Gastrocnemius medialis (tissue), 4 donors: ENCODE measurements at regions of chr18 and their contacts with region 1.

Region 1: GRCh38 chr18:75161256-75162028 is 47.5 kb downstream of the PTGR3 start:
- DNase-seq: peak in 1 of 2 donors; percentile 65
- ATAC-seq: peak; percentile 68 to 86
- H3K4me3 ChIP-seq: peak overlapping the region; percentile 53 to 59 (median 55)
- H3K27ac ChIP-seq: peak overlapping the region; percentile 22 to 60 (median 32)
- H3K4me1 ChIP-seq: peaks cover 16 to 18% of the 10 kb centered on the region in 2 donors
- H3K27me3 ChIP-seq: no peaks in the 10 kb centered on the region
- CTCF ChIP-seq: peak in 2 of 5 experiments; percentile 16 to 40
- POLR2A ChIP-seq: no peak

Region 2: DNA sequence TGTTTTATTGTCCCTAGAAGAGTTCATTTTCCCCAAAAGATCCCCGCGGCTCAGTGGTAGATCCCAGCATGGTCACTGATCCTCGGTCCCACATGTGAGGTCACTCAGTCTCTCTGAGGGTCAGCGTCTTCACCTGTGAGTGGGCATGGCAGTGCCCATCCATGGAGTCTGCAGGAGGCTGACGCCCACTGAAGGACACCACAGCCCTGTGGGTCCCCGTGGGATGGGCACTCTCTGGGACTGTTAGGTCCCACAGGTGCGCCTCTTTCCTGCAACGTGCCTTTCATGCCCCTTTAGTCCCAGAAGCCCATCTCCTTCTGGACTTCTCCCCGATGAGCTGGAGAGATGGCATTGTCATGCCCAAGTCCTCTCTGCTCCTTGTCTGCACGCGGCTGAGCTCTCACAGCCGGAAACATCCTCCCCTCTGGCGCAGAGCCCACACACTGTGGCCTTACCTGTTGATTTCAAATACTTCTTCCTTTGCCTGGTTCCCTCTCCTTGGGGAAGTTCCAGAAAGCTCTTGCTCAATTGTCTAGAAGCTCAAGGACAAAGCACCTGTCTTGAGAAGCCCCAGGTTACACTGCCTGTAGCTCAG is 28.4 kb before region 1 on chr18:
- in situ Hi-C with region 1: no loop called
- intact Hi-C with region 1: loop called (anchors 2 kb)
- DNase-seq: no peak
- ATAC-seq: no peak
- H3K4me3 ChIP-seq: no peak overlapping the region
- H3K27ac ChIP-seq: no peak overlapping the region
- H3K4me1 ChIP-seq: no peaks in the 10 kb centered on the region
- H3K27me3 ChIP-seq: peaks cover 0 to 8% (median 2%) of the 10 kb centered on the region in 3 donors
- CTCF ChIP-seq: no peak
- POLR2A ChIP-seq: no peak

Region 3: GRCh38 chr18:75204269-75204731 is 42.9 kb after region 1 on chr18:
- in situ Hi-C with region 1: no loop called
- intact Hi-C with region 1: loop called (anchors 5 kb)
- DNase-seq: no peak
- ATAC-seq: no peak
- H3K4me3 ChIP-seq: peak overlapping the region; percentile 30 to 47 (median 39)
- H3K27ac ChIP-seq: peak overlapping the region; percentile 80 to 99 (median 93)
- H3K4me1 ChIP-seq: peaks cover 69 to 71% of the 10 kb centered on the region in 2 donors
- H3K27me3 ChIP-seq: no peaks in the 10 kb centered on the region
- CTCF ChIP-seq: no peak
- POLR2A ChIP-seq: no peak

Region 4: DNA sequence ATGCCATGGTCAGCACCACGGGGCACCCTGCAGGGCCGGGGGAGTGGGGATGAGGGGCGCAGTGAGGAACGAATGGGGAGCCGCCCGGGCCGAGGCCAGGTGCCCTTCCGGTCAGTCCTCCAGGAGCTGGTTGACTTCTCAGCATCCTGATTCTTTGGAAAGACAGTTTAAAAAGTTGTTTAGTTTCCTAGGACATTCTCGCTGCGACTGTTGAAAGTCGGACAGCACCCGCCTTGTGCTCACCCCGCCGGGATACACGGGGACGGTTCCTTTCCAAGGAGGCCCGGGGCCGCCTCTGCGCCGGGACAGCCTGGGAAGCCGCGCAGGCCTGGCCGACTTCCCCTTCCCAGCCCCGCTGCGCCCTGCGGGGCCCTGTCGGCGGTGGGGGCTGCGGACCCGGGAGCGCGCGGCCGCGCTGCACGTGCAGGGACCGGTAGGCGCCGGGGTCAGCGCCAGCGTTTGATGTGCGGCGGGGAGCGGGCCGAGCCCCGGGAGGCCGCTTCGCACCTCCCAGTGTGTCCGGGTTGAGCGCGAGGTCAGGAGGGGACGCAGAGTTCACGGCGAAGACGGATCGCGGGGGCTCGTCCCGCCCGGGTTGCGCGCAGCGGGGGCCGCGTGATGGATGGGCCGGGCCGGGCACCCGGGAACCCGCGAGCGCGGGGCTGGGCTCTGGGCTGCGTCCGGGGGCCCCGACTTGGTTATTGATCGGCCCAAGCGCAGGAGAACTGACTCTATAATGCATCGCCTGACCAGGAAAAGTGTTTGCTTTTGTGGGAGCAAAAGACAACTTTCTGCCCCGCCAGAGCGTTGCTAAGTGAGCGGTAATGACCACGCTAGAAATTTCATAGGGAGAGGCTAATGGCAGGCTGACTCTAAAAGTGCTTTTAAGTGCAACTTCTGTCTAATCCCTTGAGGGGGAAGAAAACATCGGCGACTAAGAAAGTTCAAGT is 294.1 kb after region 1 on chr18:
- in situ Hi-C with region 1: loop called in 2 of 4 experiments (anchors 25 kb)
- intact Hi-C with region 1: no loop called
- DNase-seq: no peak
- ATAC-seq: no peak
- H3K4me3 ChIP-seq: peak overlapping the region; percentile 15 to 48 (median 38)
- H3K27ac ChIP-seq: no peak overlapping the region
- H3K4me1 ChIP-seq: no peaks in the 10 kb centered on the region
- H3K27me3 ChIP-seq: peaks cover 0 to 15% (median 9%) of the 10 kb centered on the region in 3 donors
- CTCF ChIP-seq: no peak
- POLR2A ChIP-seq: no peak